A673 (cell line): ENCODE measurements at regions of chr5 and their contacts with region 1.

Region 1: GRCh38 chr5:40904205-40904993 is 4.9 kb upstream of the C7 start:
- DNase-seq: peak; percentile 90
- H3K4me3 ChIP-seq: no peak overlapping the region
- H3K27ac ChIP-seq: no peak overlapping the region
- H3K4me1 ChIP-seq: peaks cover 12% of the 10 kb centered on the region
- H3K27me3 ChIP-seq: no peaks in the 10 kb centered on the region
- CTCF ChIP-seq: peak; percentile 97

Region 2: DNA sequence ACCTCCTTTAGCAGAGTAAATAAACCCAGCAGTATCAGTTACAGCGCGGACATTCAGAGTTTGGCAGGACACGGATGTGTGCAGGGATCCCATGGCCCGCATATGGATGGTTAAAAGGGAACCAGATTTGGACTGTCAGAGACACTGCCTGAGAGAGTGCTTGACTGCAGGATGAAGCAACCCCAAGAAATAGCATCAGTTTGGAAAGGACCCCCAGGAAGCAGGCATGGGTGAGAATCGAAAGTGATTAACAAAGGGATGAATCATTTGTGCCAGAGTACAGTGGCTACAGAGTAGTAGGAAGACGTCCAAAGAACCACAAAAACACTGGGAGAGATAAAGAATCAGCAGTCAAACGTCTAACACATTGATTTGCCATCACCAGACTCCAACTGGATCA is 10.4 kb after region 1 on chr5:
- CTCF ChIA-PET with region 1: interaction called, 10 read pairs
- POLR2A ChIA-PET with region 1: no interaction called
- intact Hi-C with region 1: no loop called
- DNase-seq: no peak
- H3K4me3 ChIP-seq: no peak overlapping the region
- H3K27ac ChIP-seq: no peak overlapping the region
- H3K4me1 ChIP-seq: peaks cover 6% of the 10 kb centered on the region
- H3K27me3 ChIP-seq: no peaks in the 10 kb centered on the region
- CTCF ChIP-seq: no peak

Region 3: DNA sequence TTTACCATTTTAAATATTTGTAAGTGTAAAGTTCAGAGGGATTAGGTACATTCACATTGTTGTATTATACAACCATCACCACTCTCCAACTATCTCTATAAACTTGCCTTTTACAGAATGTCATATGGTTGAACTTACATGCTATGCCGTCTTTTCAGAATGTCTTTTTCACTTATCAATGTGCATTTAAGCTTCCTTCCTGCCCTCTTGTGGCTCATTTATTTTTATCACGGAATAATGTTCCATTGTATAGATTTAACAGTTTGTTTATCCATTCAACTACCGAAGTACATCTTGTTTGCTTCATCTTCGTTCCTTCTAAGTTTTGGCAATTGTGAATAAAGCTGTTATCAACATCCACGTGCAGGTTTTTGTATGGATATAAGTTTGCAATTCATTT is 442.2 kb after region 1 on chr5:
- CTCF ChIA-PET with region 1: interaction called, 6 read pairs
- POLR2A ChIA-PET with region 1: no interaction called
- intact Hi-C with region 1: loop called (anchors 1 kb)
- DNase-seq: peak; percentile 43
- H3K4me3 ChIP-seq: no peak overlapping the region
- H3K27ac ChIP-seq: no peak overlapping the region
- H3K4me1 ChIP-seq: peaks cover 5% of the 10 kb centered on the region
- H3K27me3 ChIP-seq: no peaks in the 10 kb centered on the region
- CTCF ChIP-seq: peak; percentile 40; the same call in 1 of the 2 replicates

Region 4: GRCh38 chr5:41636605-41637004 is 732.2 kb after region 1 on chr5:
- CTCF ChIA-PET with region 1: interaction called, 10 read pairs
- POLR2A ChIA-PET with region 1: no interaction called
- intact Hi-C with region 1: loop called (anchors 2 kb)
- DNase-seq: peak; percentile 63
- H3K4me3 ChIP-seq: no peak overlapping the region
- H3K27ac ChIP-seq: no peak overlapping the region
- H3K4me1 ChIP-seq: no peaks in the 10 kb centered on the region
- H3K27me3 ChIP-seq: no peaks in the 10 kb centered on the region
- CTCF ChIP-seq: peak; percentile 53

Region 5: DNA sequence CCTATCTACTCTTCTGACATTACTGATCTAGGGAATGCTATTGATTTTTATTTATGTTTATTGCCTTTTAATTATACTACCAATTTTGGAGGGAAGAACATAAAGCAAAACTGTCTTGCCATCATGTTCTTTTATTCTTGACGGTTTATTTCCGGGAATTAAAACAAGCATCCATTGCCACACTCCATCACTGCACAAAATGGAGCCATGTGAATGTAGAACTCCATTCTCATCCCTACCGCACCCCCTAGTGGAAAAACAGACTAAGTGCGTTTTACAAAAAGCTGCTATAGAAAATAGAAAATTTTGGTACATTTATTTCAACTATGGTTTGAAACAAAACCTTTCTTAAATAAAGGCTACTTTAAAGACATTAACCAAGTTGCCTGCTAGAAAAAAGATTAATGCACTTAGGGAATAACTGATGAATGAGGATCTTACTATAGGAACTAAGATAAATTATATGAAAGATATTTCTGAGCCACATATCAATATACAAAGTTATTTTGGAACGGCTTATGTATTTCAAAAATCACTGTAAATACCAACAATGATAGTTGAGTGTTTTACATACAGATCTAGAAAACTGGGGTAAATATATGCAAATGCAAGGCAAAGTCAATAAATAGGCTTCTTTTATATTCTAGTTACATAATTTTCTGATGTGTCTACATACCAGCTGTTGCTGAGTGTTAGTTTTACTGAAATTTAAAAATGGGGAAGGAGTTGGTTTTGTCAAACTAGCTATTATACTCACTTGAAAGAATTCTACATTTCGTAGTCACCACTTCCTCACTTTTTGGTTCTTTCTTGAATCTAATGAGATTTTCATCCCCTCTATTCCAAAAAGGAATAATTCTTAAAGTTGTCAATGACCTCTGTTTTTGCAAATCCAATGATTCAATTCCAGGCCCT is 939.3 kb after region 1 on chr5:
- CTCF ChIA-PET with region 1: no interaction called
- POLR2A ChIA-PET with region 1: no interaction called
- intact Hi-C with region 1: loop called (anchors 2 kb)
- DNase-seq: peak; percentile 80
- H3K4me3 ChIP-seq: no peak overlapping the region
- H3K27ac ChIP-seq: no peak overlapping the region
- H3K4me1 ChIP-seq: no peaks in the 10 kb centered on the region
- H3K27me3 ChIP-seq: no peaks in the 10 kb centered on the region
- CTCF ChIP-seq: peak; percentile 87